ENCODE measurements at regions of chr4 and their contacts with region 1.

Region 1: GRCh38 chr4:145829629-145830395 is 108.8 kb downstream of the ZNF827 start:
- DNase-seq: no peak
- H3K4me3 Mint-ChIP-seq: peak overlapping the region; percentile 63
- H3K27ac Mint-ChIP-seq: peak overlapping the region; percentile 91
- H3K4me1 Mint-ChIP-seq: peaks cover 61% of the 10 kb centered on the region
- H3K27me3 Mint-ChIP-seq: no peaks in the 10 kb centered on the region

Region 2: DNA sequence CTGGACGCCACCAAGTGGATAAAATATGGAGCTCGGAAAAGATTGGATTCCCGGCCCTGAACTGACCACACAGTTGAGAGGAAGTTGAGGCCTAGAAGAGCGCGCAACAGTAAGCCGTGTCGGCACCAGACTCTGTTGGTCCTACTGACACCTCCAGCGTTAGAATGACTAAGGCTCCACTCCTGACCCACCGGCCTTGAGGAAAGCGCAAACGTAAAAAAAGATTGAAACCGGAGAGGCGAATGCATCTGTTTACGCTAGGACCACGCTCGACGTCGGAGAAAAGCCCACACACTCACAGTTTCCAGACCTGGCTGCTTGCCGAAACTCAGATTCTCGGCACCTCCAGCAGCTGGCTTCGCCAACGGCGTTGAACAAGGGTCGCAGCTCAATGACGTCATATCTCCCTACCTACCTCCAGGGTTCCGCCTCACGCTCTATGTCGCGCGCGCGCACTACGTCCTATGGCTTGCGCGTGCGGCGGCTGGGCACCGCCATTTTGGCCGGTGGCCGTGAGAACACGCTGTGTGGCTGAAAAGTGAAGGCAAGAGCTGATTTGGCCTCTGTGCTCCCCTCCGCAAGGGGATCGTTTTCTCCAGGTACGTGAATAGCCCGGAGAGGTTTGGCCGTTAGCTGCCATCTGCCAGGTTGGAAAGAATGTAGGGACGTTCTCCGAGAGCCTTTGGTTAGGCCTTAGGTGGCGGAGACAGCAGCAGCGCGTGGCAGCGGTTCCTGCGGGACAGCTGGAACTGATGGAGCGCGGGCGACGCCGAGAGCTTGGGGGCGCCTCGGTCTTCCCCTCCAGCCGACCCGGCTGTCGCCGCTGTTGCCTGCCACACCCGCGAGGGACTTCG is 731.8 kb before region 1 on chr4 and contains the starts of genes ABCE1 and ANAPC10:
- intact Hi-C with region 1: loop called (anchors 1 kb)
- DNase-seq: peak; percentile 94
- H3K4me3 Mint-ChIP-seq: peak within 1 kb of the TSS; percentile 92
- H3K27ac Mint-ChIP-seq: peak within 1 kb of the TSS; percentile 100
- H3K4me1 Mint-ChIP-seq: peaks cover 27% of the 10 kb centered on the region
- H3K27me3 Mint-ChIP-seq: no peaks in the 10 kb centered on the region
- total RNA-seq, gene ABCE1: 155 and 176 TPM in 2 replicates
- total RNA-seq, gene ANAPC10: 25.4 and 32.1 TPM in 2 replicates

Region 3: GRCh38 chr4:145481164-145481941 is 348.5 kb before region 1 on chr4 and contains the start of gene SMAD1:
- intact Hi-C with region 1: loop called (anchors 1 kb)
- DNase-seq: peak; percentile 11
- H3K4me3 Mint-ChIP-seq: peak within 1 kb of the TSS; percentile 73
- H3K27ac Mint-ChIP-seq: peak within 1 kb of the TSS; percentile 49
- H3K4me1 Mint-ChIP-seq: peaks cover 6% of the 10 kb centered on the region
- H3K27me3 Mint-ChIP-seq: peaks cover 33% of the 10 kb centered on the region
- total RNA-seq, gene SMAD1: 3.1 and 3.2 TPM in 2 replicates

Region 4: GRCh38 chr4:145732895-145733880 is 96.6 kb before region 1 on chr4:
- intact Hi-C with region 1: loop called (anchors 1 kb)
- DNase-seq: peak; percentile 82
- H3K4me3 Mint-ChIP-seq: peak overlapping the region; percentile 79
- H3K27ac Mint-ChIP-seq: peak overlapping the region; percentile 24
- H3K4me1 Mint-ChIP-seq: peaks cover 10% of the 10 kb centered on the region
- H3K27me3 Mint-ChIP-seq: peaks cover 3% of the 10 kb centered on the region

Region 5: GRCh38 chr4:145785391-145786008 is 44.3 kb before region 1 on chr4:
- intact Hi-C with region 1: loop called (anchors 1 kb)
- DNase-seq: no peak
- H3K4me3 Mint-ChIP-seq: no peak overlapping the region
- H3K27ac Mint-ChIP-seq: peak overlapping the region; percentile 72
- H3K4me1 Mint-ChIP-seq: peaks cover 49% of the 10 kb centered on the region
- H3K27me3 Mint-ChIP-seq: no peaks in the 10 kb centered on the region

Region 6: GRCh38 chr4:145868637-145869409 is 39.0 kb after region 1 on chr4:
- intact Hi-C with region 1: loop called (anchors 2 kb)
- DNase-seq: no peak
- H3K4me3 Mint-ChIP-seq: no peak overlapping the region
- H3K27ac Mint-ChIP-seq: no peak overlapping the region
- H3K4me1 Mint-ChIP-seq: peaks cover 39% of the 10 kb centered on the region
- H3K27me3 Mint-ChIP-seq: no peaks in the 10 kb centered on the region

Measured in activated T-helper 1 cell treated with anti-CD3 and anti-CD28 coated beads, Interleukin-12 subunit alpha, Interleukin-12 subunit beta, Interleukin-2, Interleukin-4 antibody, amounts not matched to agents 30 ng/mL and 10 ng/mL and 1 ng/mL, durations not matched to agents 14 hours and 24 hours and 36 hours (primary cell).